ENCODE measurements at regions of chr11 and their contacts with region 1.

Region 1: GRCh38 chr11:67095214-67095507 is 23.9 kb upstream of the KDM2A start:
- DNase-seq: no peak
- ATAC-seq: no peak
- H3K4me3 ChIP-seq: peak overlapping the region in 1 of 3 experiments; percentile 61; a peak in 1 of 6 replicates
- H3K27ac ChIP-seq: no peak overlapping the region
- H3K4me1 ChIP-seq: peaks cover 18% of the 10 kb centered on the region
- H3K27me3 ChIP-seq: peaks cover 0 to 7% of the 10 kb centered on the region in 2 experiments; a peak in 3 of 5 replicates
- CTCF ChIP-seq: no peak
- EP300 ChIP-seq: no peak
- POLR2A ChIP-seq: no peak
- RAD21 ChIP-seq: 0 out of 2 replicates have a peak, but pooled peaks have one; percentile 1

Region 2: DNA sequence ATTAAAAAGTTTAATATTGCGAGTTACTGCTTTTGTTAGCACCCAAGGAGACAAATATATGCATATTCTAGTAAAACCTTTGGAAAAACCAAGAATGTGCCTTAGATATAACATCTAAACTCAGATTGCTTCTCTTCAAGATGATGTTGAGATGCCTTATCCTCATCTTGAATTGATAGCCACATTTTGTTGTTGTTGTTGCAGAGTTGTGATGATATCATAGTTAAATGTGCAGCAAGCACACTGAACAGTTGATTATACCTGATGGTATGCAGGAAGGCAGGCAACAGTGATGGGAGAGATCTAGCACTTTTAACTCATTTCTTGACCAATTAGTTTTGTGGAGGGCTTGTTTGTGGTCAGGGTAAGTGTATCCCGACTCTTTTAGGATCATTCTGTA is 71.9 kb after region 1 on chr11:
- CTCF ChIA-PET with region 1: interaction called, 3 read pairs
- POLR2A ChIA-PET with region 1: no interaction called
- in situ Hi-C with region 1: no loop called
- intact Hi-C with region 1: loop called (anchors 2 kb)
- DNase-seq: no peak
- ATAC-seq: no peak
- H3K4me3 ChIP-seq: no peak overlapping the region
- H3K27ac ChIP-seq: no peak overlapping the region
- H3K4me1 ChIP-seq: peaks cover 21% of the 10 kb centered on the region
- H3K27me3 ChIP-seq: no peaks in the 10 kb centered on the region
- CTCF ChIP-seq: no peak
- EP300 ChIP-seq: no peak
- POLR2A ChIP-seq: no peak
- RAD21 ChIP-seq: no peak

Measured in HepG2 (cell line).